OCI-LY7 (cell line): ENCODE measurements at regions of chr3 and their contacts with region 1.

Region 1: GRCh38 chr3:72818092-72818773 is 30.0 kb downstream of the SHQ1 start:
- DNase-seq: peak; percentile 22
- H3K4me3 ChIP-seq: no peak overlapping the region
- H3K27ac ChIP-seq: no peak overlapping the region
- H3K4me1 ChIP-seq: peaks cover 55% of the 10 kb centered on the region
- CTCF ChIP-seq: peak; percentile 85

Region 2: DNA sequence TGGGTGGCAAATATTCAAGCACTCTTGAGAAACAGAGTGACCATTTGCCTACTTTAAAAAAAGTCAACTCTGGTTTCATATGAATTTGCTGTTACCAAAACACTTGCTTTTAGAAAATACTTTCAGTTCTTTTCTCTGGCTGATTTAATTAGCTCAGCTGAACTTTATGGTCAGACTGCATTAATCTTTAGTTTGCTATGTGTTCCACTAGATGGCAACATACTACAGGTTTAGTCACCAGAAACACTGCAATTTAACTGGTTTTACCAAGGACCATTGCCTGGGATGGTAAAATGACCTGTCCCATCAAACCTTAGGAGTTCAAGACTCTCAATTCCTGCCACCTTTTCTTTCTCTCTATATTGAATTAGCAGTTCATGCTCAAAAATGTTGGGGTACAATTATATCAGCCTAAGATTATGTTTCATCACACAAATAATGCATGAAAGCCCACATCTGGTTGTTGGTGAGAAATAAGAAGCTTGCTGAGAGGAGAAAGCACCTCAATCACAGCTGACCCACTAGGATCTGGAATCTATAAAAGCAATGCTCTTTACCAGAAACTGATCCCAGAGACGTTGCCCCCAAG is 1107.2 kb before region 1 on chr3:
- CTCF ChIA-PET with region 1: no interaction called
- POLR2A ChIA-PET with region 1: no interaction called
- intact Hi-C with region 1: loop called (anchors 2 kb)
- DNase-seq: peak; percentile 65
- H3K4me3 ChIP-seq: no peak overlapping the region
- H3K27ac ChIP-seq: no peak overlapping the region
- H3K4me1 ChIP-seq: no peaks in the 10 kb centered on the region
- CTCF ChIP-seq: peak; percentile 88

Region 3: GRCh38 chr3:71875461-71875947 is 942.7 kb before region 1 on chr3:
- CTCF ChIA-PET with region 1: interaction called, 7 read pairs
- POLR2A ChIA-PET with region 1: no interaction called
- intact Hi-C with region 1: loop called (anchors 1 kb)
- DNase-seq: peak; percentile 82
- H3K4me3 ChIP-seq: no peak overlapping the region
- H3K27ac ChIP-seq: no peak overlapping the region
- H3K4me1 ChIP-seq: peaks cover 4% of the 10 kb centered on the region
- CTCF ChIP-seq: peak; percentile 93

Region 4: GRCh38 chr3:71955240-71956068 is 862.8 kb before region 1 on chr3:
- CTCF ChIA-PET with region 1: no interaction called
- POLR2A ChIA-PET with region 1: no interaction called
- intact Hi-C with region 1: loop called (anchors 10 kb)
- DNase-seq: peak; percentile 66
- H3K4me3 ChIP-seq: no peak overlapping the region
- H3K27ac ChIP-seq: no peak overlapping the region
- H3K4me1 ChIP-seq: peaks cover 25% of the 10 kb centered on the region
- CTCF ChIP-seq: peak; percentile 91

Region 5: DNA sequence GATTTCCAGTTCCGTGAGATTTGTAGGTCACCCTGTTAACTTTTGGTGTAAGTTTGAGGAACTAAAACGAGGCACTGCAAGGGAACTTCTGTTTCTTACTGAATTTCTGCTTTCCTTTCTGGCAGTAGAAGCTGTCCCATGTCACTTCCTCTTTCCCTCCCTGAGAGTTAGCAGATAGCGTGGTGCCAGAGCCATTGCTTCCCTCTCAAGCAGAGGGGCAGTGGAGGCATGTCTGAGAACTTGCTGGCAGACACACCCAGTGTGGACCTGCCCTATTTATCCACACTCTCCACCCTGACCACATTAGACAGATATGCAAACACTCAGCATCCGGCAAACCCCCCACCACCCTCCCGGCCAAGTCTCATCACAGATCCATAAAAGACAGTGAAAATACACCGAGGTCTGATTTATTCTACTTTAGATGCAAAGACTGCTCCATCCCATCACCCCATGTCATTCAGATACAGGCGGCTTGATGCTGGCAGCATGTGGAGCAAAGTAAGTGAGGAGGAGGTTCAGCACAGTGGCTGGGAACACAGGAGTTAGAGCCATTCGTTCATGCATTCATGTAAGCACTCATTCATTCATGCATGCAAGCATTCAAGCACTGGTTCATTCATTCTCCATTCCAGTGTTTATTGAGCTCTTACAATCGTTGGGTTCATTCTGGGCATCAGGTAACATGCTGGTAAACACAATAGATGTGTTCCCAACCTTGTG is 294.6 kb before region 1 on chr3:
- CTCF ChIA-PET with region 1: no interaction called
- POLR2A ChIA-PET with region 1: no interaction called
- intact Hi-C with region 1: loop called (anchors 10 kb)
- DNase-seq: peak; percentile 81
- H3K4me3 ChIP-seq: peak overlapping the region; percentile 20
- H3K27ac ChIP-seq: peak overlapping the region; percentile 15
- H3K4me1 ChIP-seq: peaks cover 21% of the 10 kb centered on the region
- CTCF ChIP-seq: no peak

Region 6: GRCh38 chr3:72614394-72615074 is 203.7 kb before region 1 on chr3:
- CTCF ChIA-PET with region 1: no interaction called
- POLR2A ChIA-PET with region 1: no interaction called
- intact Hi-C with region 1: no loop called
- DNase-seq: no peak
- H3K4me3 ChIP-seq: no peak overlapping the region
- H3K27ac ChIP-seq: no peak overlapping the region
- H3K4me1 ChIP-seq: no peaks in the 10 kb centered on the region
- CTCF ChIP-seq: no peak

Region 7: GRCh38 chr3:72756900-72757299 is 61.3 kb before region 1 on chr3:
- CTCF ChIA-PET with region 1: no interaction called
- POLR2A ChIA-PET with region 1: interaction called, 5 read pairs
- intact Hi-C with region 1: loop called (anchors 2 kb)
- DNase-seq: peak; percentile 95
- H3K4me3 ChIP-seq: peak overlapping the region; percentile 56
- H3K27ac ChIP-seq: peak overlapping the region; percentile 75
- H3K4me1 ChIP-seq: peaks cover 61% of the 10 kb centered on the region
- CTCF ChIP-seq: no peak